ENCODE measurements at regions of chr19 and their contacts with region 1.

Region 1: GRCh38 chr19:47436712-47437401 is 17.5 kb upstream of the MEIS3 start:
- DNase-seq: peak; percentile 86
- H3K4me3 ChIP-seq: no peak overlapping the region; a peak in 1 of 4 replicates
- H3K27ac ChIP-seq: no peak overlapping the region
- H3K4me1 ChIP-seq: no peaks in the 10 kb centered on the region; a peak in 1 of 4 replicates
- H3K27me3 ChIP-seq: no peaks in the 10 kb centered on the region
- CTCF ChIP-seq: peak; percentile 86
- EP300 ChIP-seq: no peak
- RAD21 ChIP-seq: peak; percentile 98

Region 2: GRCh38 chr19:47370045-47370611 is 66.7 kb before region 1 on chr19:
- CTCF ChIA-PET with region 1: no interaction called
- POLR2A ChIA-PET with region 1: no interaction called
- DNase-seq: no peak
- H3K4me3 ChIP-seq: no peak overlapping the region
- H3K27ac ChIP-seq: no peak overlapping the region
- H3K4me1 ChIP-seq: no peaks in the 10 kb centered on the region
- H3K27me3 ChIP-seq: no peaks in the 10 kb centered on the region
- CTCF ChIP-seq: no peak
- EP300 ChIP-seq: no peak
- RAD21 ChIP-seq: no peak

Region 3: GRCh38 chr19:47398707-47399597 is 37.9 kb before region 1 on chr19:
- CTCF ChIA-PET with region 1: no interaction called
- POLR2A ChIA-PET with region 1: no interaction called
- DNase-seq: no peak
- H3K4me3 ChIP-seq: no peak overlapping the region
- H3K27ac ChIP-seq: no peak overlapping the region
- H3K4me1 ChIP-seq: peaks cover 0 to 7% of the 10 kb centered on the region in 2 experiments; a peak in 1 of 4 replicates
- H3K27me3 ChIP-seq: no peaks in the 10 kb centered on the region
- CTCF ChIP-seq: no peak
- EP300 ChIP-seq: no peak
- RAD21 ChIP-seq: no peak

Region 4: GRCh38 chr19:47456721-47457478 is 20.0 kb after region 1 on chr19:
- CTCF ChIA-PET with region 1: interaction called, 11 read pairs
- POLR2A ChIA-PET with region 1: no interaction called
- DNase-seq: no peak
- H3K4me3 ChIP-seq: no peak overlapping the region
- H3K27ac ChIP-seq: no peak overlapping the region
- H3K4me1 ChIP-seq: no peaks in the 10 kb centered on the region
- H3K27me3 ChIP-seq: no peaks in the 10 kb centered on the region; the same call in 1 of the 2 replicates
- CTCF ChIP-seq: no peak
- EP300 ChIP-seq: no peak
- RAD21 ChIP-seq: no peak

Region 5: GRCh38 chr19:47494729-47495128 is 57.9 kb after region 1 on chr19:
- CTCF ChIA-PET with region 1: interaction called, 67 read pairs
- POLR2A ChIA-PET with region 1: no interaction called
- DNase-seq: peak; percentile 98
- H3K4me3 ChIP-seq: no peak overlapping the region
- H3K27ac ChIP-seq: peak overlapping the region in 1 of 2 experiments; percentile 84; a peak in 2 of 4 replicates
- H3K4me1 ChIP-seq: peaks cover 0 to 82% of the 10 kb centered on the region in 2 experiments; a peak in 1 of 4 replicates
- H3K27me3 ChIP-seq: no peaks in the 10 kb centered on the region
- CTCF ChIP-seq: no peak
- EP300 ChIP-seq: peak in 1 of 2 experiments; percentile 65; a peak in 1 of 4 replicates
- RAD21 ChIP-seq: no peak

Region 6: GRCh38 chr19:47608969-47609905 is 172.4 kb after region 1 on chr19 and contains the start of gene BICRA:
- CTCF ChIA-PET with region 1: interaction called, 16 read pairs
- POLR2A ChIA-PET with region 1: no interaction called
- DNase-seq: peak; percentile 92
- H3K4me3 ChIP-seq: peak within 1 kb of the TSS; percentile 87 to 99
- H3K27ac ChIP-seq: peak within 1 kb of the TSS; percentile 89 to 93
- H3K4me1 ChIP-seq: peaks cover 27 to 29% of the 10 kb centered on the region in 2 experiments; a peak in 2 of 4 replicates
- H3K27me3 ChIP-seq: no peaks in the 10 kb centered on the region
- CTCF ChIP-seq: no peak
- EP300 ChIP-seq: no peak
- RAD21 ChIP-seq: no peak
- polyA plus RNA-seq, gene BICRA: 0.75 and 1.4 TPM in 2 replicates

Region 7: DNA sequence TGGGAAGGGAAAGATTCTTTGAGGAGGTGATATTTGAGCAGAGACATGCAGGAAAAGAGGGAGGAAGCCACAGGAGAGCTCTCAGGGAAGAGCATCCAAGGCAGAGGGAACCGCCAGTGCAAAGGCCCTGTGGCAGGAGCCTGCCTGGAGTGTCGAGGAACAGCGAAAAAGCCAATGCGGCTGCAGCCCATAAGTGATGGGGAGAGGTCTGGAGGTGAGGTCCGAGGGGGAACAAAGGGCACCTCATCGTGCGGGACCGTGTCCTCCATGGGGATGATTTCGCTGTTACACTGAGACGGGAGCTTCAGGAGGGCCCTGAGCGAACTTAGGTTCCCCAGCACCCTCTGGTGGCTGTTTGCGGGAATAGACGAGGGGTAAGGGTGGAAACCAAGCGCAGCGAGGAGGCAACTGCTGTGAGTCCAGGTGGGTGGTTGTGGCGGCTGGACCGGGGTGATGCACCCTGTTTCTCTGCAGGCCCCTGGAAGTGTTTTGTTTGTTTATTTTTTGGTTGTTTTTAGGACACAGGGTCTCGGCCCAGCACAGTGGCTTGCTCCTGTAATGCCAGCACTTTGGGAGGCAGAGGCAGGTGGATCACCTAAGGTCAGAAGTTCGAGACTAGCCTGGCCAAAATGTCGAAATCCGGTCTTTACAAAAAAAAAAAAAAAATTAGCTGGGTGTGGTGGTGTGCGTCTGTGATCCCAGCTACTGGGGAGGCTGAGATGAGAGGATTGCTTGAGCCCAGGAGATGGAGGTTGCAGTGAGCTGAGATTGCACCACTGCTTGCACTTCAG is 270.5 kb after region 1 on chr19:
- CTCF ChIA-PET with region 1: interaction called, 73 read pairs
- POLR2A ChIA-PET with region 1: no interaction called
- DNase-seq: peak; percentile 84
- H3K4me3 ChIP-seq: no peak overlapping the region; a peak in 1 of 4 replicates
- H3K27ac ChIP-seq: no peak overlapping the region
- H3K4me1 ChIP-seq: no peaks in the 10 kb centered on the region
- H3K27me3 ChIP-seq: no peaks in the 10 kb centered on the region
- CTCF ChIP-seq: peak; percentile 75
- EP300 ChIP-seq: no peak
- RAD21 ChIP-seq: peak; percentile 78